ENCODE measurements at regions of chr10 and their contacts with region 1.

Region 1: DNA sequence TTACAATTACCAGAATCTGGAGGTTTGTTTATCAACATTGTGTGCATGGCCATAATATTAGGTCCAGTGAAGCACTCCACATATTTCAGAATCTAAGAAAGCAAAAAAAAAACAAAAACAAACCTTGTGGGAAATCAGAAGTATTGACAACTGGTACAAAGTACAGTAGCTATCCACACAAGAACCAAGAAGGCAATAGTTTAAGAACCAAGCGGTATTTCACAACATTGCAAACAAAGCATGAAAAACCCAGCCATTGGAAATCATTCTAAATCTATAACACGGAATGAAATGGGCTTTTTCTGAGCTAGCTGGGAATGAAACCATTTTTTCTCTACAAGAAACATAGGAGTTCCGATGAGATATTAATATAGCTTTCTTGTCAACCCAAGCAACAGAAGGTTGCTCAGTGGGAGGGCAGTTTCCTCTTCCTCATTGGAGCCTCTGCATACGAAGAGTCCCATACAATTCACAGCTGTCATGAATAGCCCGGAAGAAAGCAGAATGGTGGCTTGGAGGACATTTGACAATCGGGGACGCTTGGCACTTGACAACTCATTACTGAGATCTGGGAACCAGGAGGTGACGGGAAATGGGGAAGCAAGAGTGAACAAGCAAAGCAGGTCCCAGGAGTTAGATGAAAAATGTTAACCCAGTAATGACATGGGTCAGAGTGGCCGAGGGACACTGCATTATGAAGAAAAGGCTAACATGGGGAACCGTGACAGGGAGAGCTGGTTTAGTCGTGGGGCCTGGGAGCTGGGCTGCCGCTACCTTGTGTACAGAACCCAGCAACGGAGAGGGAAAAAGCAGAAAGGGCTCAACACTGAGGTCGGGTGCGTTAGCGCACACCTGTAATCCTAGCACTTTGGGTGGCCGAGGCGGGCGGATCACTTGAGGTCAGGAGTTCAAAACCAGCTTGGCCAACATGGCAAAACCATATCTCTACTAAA is 7.8 kb downstream of the PHYH start:
- DNase-seq: no peak
- ATAC-seq: no peak
- H3K4me3 ChIP-seq: no peak overlapping the region
- H3K4me3 Mint-ChIP-seq: no peak overlapping the region
- H3K27ac ChIP-seq: no peak overlapping the region
- H3K27ac Mint-ChIP-seq: no peak overlapping the region
- H3K4me1 ChIP-seq: no peaks in the 10 kb centered on the region
- H3K4me1 Mint-ChIP-seq: peaks cover 0 to 6% (median 0%) of the 10 kb centered on the region in 3 donors
- H3K27me3 ChIP-seq: no peaks in the 10 kb centered on the region
- H3K27me3 Mint-ChIP-seq: no peaks in the 10 kb centered on the region

Region 2: DNA sequence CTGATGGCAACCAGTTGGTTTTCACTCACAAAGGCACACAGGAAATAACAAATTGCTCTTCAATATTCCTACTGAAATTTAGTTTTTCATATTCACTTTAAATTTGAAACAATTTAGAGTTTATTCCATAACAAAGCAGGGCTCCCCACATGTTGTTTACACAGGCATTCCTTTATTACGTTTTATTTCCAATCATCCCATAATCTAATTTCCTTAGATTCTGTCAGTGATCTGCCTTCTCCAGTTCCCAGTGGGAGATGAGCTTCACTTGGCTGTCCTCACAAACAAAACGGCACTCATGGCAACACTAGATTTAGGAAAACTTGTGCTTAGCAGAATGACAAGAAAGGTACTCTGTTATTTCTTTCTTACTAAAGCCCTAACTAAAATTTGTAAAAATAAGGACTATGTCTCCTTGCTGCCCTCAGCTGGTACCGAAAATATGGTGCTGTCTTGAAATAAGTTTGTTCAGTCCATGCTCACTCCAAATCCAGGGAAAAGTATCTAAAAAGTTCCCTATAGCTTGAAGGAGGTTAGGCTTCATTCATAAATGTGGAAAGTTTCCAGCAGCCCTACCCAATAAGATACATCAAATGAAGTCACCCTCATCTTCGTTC is 15.2 kb before region 1 on chr10:
- CTCF ChIA-PET with region 1: no interaction called
- POLR2A ChIA-PET with region 1: interaction called in 1 of 2 experiments, 10 read pairs
- DNase-seq: no peak
- ATAC-seq: no peak
- H3K4me3 ChIP-seq: no peak overlapping the region
- H3K4me3 Mint-ChIP-seq: no peak overlapping the region
- H3K27ac ChIP-seq: no peak overlapping the region
- H3K27ac Mint-ChIP-seq: no peak overlapping the region
- H3K4me1 ChIP-seq: no peaks in the 10 kb centered on the region
- H3K4me1 Mint-ChIP-seq: peaks cover under 1 to 1% (median 1%) of the 10 kb centered on the region in 3 donors
- H3K27me3 ChIP-seq: no peaks in the 10 kb centered on the region
- H3K27me3 Mint-ChIP-seq: no peaks in the 10 kb centered on the region